Mammary epithelial cell (primary cell): ENCODE measurements at regions of chr13 and their contacts with region 1.

Region 1: GRCh38 chr13:27744801-27745200 is 47.5 kb upstream of the GSX1 start:
- DNase-seq: no peak
- H3K4me3 ChIP-seq: no peak overlapping the region
- H3K27ac ChIP-seq: no peak overlapping the region
- H3K4me1 ChIP-seq: no peaks in the 10 kb centered on the region
- H3K27me3 ChIP-seq: no peaks in the 10 kb centered on the region
- CTCF ChIP-seq: no peak

Region 2: GRCh38 chr13:27673911-27674310 is 70.9 kb before region 1 on chr13:
- CTCF ChIA-PET with region 1: no interaction called
- dilution Hi-C with region 1: loop called (anchors 5 kb)
- in situ Hi-C with region 1: no loop called
- intact Hi-C with region 1: no loop called
- DNase-seq: no peak
- H3K4me3 ChIP-seq: no peak overlapping the region
- H3K27ac ChIP-seq: no peak overlapping the region
- H3K4me1 ChIP-seq: peaks cover 12% of the 10 kb centered on the region
- H3K27me3 ChIP-seq: no peaks in the 10 kb centered on the region
- CTCF ChIP-seq: no peak

Region 3: DNA sequence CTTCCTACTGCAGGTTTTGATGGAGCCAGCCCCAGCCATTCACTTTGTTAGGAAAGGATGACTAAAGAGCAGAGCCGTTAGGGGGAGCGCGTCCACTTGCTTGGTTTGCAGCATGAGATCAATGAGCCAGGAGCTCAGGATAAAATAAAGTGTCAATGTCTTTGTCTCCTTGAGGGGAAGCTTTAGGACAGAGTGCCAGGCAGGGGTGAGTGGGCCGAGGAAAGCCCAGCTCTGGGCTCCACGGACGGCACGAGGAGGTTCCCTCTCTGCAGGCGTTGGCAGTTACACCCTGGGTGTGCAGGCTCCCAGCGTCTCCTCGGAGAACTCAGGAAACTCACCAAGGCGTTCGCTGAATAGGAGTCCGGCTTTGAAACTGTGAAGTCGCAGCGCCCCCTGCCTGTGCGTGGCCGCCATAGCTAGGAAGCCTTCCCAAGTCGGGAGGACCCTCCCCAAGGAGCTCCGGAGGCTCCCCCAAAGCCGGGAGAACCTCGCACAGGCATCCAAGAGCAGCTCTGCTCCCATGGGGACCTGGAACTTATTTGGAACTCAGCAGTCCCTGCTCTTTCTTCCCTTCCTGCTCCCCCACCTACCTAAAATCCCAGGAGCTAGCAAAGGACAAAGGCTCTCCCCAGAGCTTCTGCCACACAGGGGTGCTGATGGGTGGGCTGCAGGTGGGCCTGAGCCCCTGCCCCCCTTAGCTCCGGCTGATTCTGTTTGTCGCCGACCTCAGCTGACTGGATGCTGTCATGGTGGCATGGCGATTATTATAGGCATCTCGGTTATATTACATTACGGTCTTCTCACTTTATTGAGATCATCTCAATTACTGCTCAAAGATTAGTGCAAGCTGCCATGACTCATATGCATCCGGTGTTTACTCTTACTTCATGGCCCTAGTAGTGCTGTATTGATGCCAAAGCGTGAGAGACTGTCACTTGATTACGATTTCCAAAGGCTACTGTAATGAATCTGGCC is 81.9 kb after region 1 on chr13:
- CTCF ChIA-PET with region 1: no interaction called
- dilution Hi-C with region 1: no loop called
- in situ Hi-C with region 1: no loop called
- intact Hi-C with region 1: no loop called
- DNase-seq: peak; percentile 75
- H3K4me3 ChIP-seq: peak overlapping the region in 2 of 3 experiments; percentile 32 to 42
- H3K27ac ChIP-seq: no peak overlapping the region
- H3K4me1 ChIP-seq: peaks cover 11% of the 10 kb centered on the region
- H3K27me3 ChIP-seq: peaks cover 10% of the 10 kb centered on the region
- CTCF ChIP-seq: peak; percentile 72 to 91

Region 4: DNA sequence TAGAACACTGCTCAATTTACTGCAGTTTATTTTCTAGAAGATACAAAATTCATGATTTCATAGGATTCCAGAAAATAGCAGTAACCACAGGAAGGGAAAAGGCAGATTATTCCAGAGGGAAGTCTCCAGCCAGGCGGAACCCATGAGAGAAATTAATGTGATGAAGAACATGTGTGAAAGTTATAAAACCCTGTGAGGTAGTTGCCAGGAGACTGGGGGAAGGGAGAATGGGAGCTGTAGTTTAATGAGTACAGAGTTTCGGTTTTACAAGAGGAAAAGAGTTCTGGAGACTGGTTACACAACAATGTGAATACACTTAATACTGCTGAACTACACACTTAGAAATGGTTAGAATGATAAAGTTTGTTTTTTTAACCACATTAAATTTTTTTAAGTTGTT is 160.8 kb after region 1 on chr13:
- CTCF ChIA-PET with region 1: no interaction called
- dilution Hi-C with region 1: no loop called
- in situ Hi-C with region 1: no loop called
- intact Hi-C with region 1: no loop called
- DNase-seq: no peak
- H3K4me3 ChIP-seq: no peak overlapping the region
- H3K27ac ChIP-seq: no peak overlapping the region
- H3K4me1 ChIP-seq: no peaks in the 10 kb centered on the region
- H3K27me3 ChIP-seq: peaks cover 9% of the 10 kb centered on the region
- CTCF ChIP-seq: no peak

Region 5: GRCh38 chr13:27928805-27929753 is 184.3 kb after region 1 on chr13:
- CTCF ChIA-PET with region 1: interaction called, 10 read pairs
- dilution Hi-C with region 1: no loop called
- in situ Hi-C with region 1: no loop called
- intact Hi-C with region 1: no loop called
- DNase-seq: no peak
- H3K4me3 ChIP-seq: no peak overlapping the region
- H3K27ac ChIP-seq: no peak overlapping the region
- H3K4me1 ChIP-seq: no peaks in the 10 kb centered on the region
- H3K27me3 ChIP-seq: peaks cover 63% of the 10 kb centered on the region
- CTCF ChIP-seq: no peak

Region 6: DNA sequence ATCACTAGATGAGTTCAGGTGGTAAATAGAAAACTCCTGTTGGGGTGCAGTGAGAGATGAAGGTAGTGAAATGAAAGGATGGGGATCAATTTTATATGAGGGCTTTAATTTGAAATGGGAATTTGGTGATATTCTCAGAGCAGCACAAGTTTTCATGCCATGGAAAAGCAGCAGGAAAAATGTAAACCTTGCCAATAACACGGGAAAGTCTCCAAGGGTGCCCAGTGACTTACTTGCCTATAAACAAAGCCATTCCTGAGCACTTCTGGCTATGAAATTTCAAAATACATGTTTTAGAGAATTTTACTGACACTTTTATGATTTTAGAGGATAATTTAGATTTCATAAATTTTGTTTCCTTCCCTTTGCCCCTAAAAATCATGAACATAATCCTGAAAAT is 371.9 kb after region 1 on chr13:
- CTCF ChIA-PET with region 1: interaction called, 15 read pairs
- dilution Hi-C with region 1: no loop called
- in situ Hi-C with region 1: no loop called
- intact Hi-C with region 1: no loop called
- DNase-seq: no peak
- H3K4me3 ChIP-seq: no peak overlapping the region
- H3K27ac ChIP-seq: no peak overlapping the region
- H3K4me1 ChIP-seq: no peaks in the 10 kb centered on the region
- H3K27me3 ChIP-seq: no peaks in the 10 kb centered on the region
- CTCF ChIP-seq: no peak